Transverse colon (tissue), 4 donors: ENCODE measurements at regions of chr7 and their contacts with region 1.

Region 1: GRCh38 chr7:134432296-134433152 is 26.4 kb downstream of the AKR1B1 start:
- DNase-seq: peak; percentile 87
- H3K4me3 ChIP-seq: peak overlapping the region in 3 of 4 donors; percentile 14 to 38 (median 23)
- H3K27ac ChIP-seq: peak overlapping the region; percentile 82 to 89 (median 84)
- H3K4me1 ChIP-seq: peaks cover 3 to 20% (median 16%) of the 10 kb centered on the region in 4 donors
- H3K27me3 ChIP-seq: no peaks in the 10 kb centered on the region
- CTCF ChIP-seq: peak; percentile 62 to 96 (median 73)
- EP300 ChIP-seq: no peak
- POLR2A ChIP-seq: peak; percentile 30

Region 2: DNA sequence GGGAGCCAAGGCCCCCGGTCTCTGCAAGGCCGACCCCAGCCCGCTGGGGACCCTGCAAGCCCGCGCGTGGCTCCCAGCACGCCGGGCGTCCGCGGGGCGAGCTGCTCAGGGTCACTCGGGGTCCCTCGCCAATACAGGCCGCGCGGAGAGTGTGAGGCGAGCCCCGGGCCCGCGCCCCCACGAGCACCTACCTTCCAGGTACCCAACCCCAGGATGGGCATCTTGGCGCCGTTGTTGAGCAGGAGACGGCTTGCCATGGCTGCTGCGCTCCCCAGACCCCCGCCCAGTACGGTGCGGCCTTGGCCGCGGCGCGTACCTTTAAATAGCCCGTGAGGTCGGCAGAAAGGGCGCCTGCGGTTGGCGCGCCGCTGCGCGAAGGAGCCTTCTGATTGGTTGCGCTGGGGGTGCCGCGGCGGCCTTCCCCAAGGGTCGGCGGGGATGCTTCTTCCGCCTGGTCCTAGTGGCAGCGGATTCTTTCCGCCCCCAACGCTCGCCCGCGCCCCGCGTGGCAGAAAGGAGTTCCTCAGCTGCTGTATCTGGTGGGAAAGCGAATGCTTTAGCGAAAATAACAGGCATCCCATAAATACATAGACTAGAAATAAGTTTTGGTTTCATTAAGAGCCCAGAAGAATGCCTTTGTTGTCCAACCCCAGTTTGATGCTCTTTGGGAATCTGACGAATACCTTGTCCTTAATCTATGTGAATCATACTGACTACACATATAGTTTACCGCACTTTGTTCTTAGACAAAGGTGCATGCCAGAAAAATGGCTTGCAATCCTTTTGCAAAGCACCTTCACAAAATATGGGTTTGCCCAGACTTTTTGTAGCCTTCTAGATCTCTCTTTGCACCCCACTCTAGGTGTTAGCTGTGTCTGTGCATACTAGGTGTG is 26.5 kb after region 1 on chr7 and contains the start of gene AKR1B1:
- in situ Hi-C with region 1: no loop called
- intact Hi-C with region 1: loop called (anchors 1 kb)
- DNase-seq: peak; percentile 89
- H3K4me3 ChIP-seq: peak within 1 kb of the TSS; percentile 72 to 92 (median 79)
- H3K27ac ChIP-seq: peak within 1 kb of the TSS; percentile 84 to 91 (median 90)
- H3K4me1 ChIP-seq: peaks cover 4 to 29% (median 9%) of the 10 kb centered on the region in 4 donors
- H3K27me3 ChIP-seq: no peaks in the 10 kb centered on the region
- CTCF ChIP-seq: peak; percentile 42 to 63 (median 50)
- EP300 ChIP-seq: no peak
- POLR2A ChIP-seq: peak; percentile 58
- total RNA-seq, gene AKR1B1: 6.4 to 37.2 (median 19.4) TPM

Region 3: DNA sequence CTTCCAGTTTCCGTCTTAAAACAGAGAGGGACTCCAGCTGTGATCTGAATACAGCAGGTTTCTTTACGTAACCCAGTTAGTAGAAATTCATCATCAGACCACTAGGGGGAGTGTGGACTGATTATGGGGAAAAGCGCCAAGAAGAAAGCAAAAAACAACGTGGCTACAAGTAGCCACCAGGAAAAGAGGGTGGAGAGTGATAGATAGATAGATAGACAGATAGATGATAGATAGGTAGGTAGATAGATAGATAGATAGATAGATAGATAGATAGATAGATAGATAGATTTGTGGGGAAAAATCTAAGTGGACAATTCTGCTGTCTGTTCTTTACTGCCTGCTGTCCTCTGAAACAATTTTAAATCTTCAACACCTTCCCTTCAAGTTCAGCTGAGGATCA is 82.1 kb after region 1 on chr7:
- in situ Hi-C with region 1: no loop called
- intact Hi-C with region 1: loop called (anchors 5 kb)
- DNase-seq: peak; percentile 12
- H3K4me3 ChIP-seq: no peak overlapping the region
- H3K27ac ChIP-seq: no peak overlapping the region
- H3K4me1 ChIP-seq: peaks cover 0 to 4% (median 2%) of the 10 kb centered on the region in 4 donors
- H3K27me3 ChIP-seq: no peaks in the 10 kb centered on the region
- CTCF ChIP-seq: peak; percentile 83 to 88 (median 85)
- EP300 ChIP-seq: no peak
- POLR2A ChIP-seq: no peak

Region 4: DNA sequence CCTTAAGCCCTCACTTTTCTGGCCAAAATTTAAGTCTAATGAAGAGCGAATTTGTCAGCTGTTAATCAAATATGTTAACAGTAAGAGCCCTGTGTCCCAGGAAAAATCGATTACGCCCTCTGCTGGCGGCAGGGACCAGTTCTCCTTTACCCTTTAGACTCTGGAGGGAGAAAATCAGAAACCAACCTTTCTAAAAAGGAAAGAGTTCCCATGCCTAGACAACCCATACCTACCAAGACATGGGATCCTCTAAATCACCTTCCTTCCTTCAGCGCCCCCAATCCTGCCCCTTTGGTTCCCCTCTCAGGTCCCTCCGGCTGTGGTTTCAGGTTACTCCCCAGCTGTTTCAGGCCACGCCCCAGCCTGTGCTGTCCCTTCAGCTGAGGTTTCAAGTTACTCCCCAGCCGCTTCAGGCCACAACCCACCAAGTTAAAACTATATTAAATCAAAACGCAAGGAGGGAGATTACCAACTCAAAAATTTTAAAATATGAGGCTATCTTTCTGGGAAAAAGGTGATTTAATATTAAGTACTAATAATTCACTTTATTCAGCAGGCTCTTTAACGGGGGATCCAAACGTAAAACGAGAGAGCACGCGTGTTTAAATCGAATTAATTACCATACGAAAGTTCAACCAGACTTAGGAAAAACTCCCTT is 115.0 kb after region 1 on chr7:
- in situ Hi-C with region 1: loop called in 1 of 4 experiments (anchors 25 kb)
- intact Hi-C with region 1: no loop called
- DNase-seq: peak; percentile 83
- H3K4me3 ChIP-seq: peak overlapping the region in 2 of 4 donors; percentile 16 to 51
- H3K27ac ChIP-seq: peak overlapping the region in 1 of 4 donors; percentile 47
- H3K4me1 ChIP-seq: peaks cover 0 to 10% (median 3%) of the 10 kb centered on the region in 4 donors
- H3K27me3 ChIP-seq: no peaks in the 10 kb centered on the region
- CTCF ChIP-seq: peak; percentile 83 to 92 (median 88)
- EP300 ChIP-seq: no peak
- POLR2A ChIP-seq: no peak

Region 5: GRCh38 chr7:134605973-134606923 is 173.7 kb after region 1 on chr7:
- in situ Hi-C with region 1: loop called (anchors 5 to 10 kb)
- intact Hi-C with region 1: loop called (anchors 5 kb)
- DNase-seq: peak; percentile 61
- H3K4me3 ChIP-seq: peak overlapping the region in 1 of 4 donors; percentile 12
- H3K27ac ChIP-seq: no peak overlapping the region
- H3K4me1 ChIP-seq: peaks cover 0 to 8% (median 2%) of the 10 kb centered on the region in 4 donors
- H3K27me3 ChIP-seq: peaks cover 8% of the 10 kb centered on the region
- CTCF ChIP-seq: peak; percentile 79 to 97 (median 90)
- EP300 ChIP-seq: no peak
- POLR2A ChIP-seq: no peak

Region 6: DNA sequence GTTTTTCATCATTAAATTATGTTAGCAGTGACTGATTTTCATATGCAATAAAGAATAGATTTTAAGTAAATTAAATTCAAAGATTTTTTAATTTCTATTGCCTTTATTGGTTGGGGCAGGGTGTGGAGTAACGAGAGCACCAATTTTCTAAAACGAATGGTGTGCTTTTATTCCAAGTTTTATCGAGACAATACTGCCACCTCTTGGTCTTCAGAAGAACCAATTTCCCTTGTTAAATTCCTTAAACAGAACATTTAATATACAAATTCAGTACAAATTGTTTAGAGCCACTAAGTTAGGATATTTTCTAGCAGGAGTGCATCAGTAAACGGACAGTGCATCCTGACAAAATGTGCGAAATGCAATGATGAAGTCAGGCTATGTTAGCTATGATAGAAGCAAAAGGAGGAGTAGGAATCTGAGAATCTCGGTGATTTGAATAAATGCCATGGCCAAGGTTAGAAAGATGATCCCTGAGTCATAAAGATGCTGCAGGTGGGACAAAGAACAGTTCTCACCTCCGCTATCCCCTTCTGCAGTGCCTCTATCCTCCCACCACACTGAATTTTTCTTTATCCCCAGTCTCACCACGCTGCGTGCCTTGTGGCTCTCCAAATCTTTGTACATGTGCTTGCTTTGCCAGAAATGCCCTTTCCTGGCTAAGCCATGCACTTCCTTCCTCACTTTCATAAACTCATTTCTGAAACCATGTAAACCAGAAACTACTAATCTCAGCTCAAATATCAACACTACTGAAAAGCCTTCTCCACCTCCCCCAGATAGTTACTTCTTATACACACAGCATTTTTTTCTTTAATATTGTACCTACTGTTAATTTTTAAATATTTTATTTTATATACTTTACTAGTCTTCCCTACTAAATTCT is 521.9 kb after region 1 on chr7:
- in situ Hi-C with region 1: loop called in 1 of 4 experiments (anchors 25 kb)
- intact Hi-C with region 1: no loop called
- DNase-seq: no peak
- H3K4me3 ChIP-seq: no peak overlapping the region
- H3K27ac ChIP-seq: no peak overlapping the region
- H3K4me1 ChIP-seq: no peaks in the 10 kb centered on the region
- H3K27me3 ChIP-seq: no peaks in the 10 kb centered on the region
- CTCF ChIP-seq: peak; percentile 39 to 55 (median 53)
- EP300 ChIP-seq: no peak
- POLR2A ChIP-seq: no peak